Colonic mucosa (tissue), 4 donors: ENCODE measurements at regions of chr22 and their contacts with region 1.

Region 1: GRCh38 chr22:41403532-41404318 is 22.0 kb downstream of the TEF start:
- DNase-seq: peak; percentile 87
- H3K4me3 ChIP-seq: no peak overlapping the region
- H3K27ac ChIP-seq: no peak overlapping the region
- H3K4me1 ChIP-seq: peaks cover 4% of the 10 kb centered on the region
- H3K27me3 ChIP-seq: no peaks in the 10 kb centered on the region
- CTCF ChIP-seq: peak; percentile 92

Region 2: GRCh38 chr22:41517172-41518047 is 113.7 kb after region 1 on chr22:
- intact Hi-C with region 1: loop called (anchors 2 kb)
- DNase-seq: peak; percentile 84
- H3K4me3 ChIP-seq: no peak overlapping the region
- H3K27ac ChIP-seq: no peak overlapping the region
- H3K4me1 ChIP-seq: no peaks in the 10 kb centered on the region
- H3K27me3 ChIP-seq: no peaks in the 10 kb centered on the region
- CTCF ChIP-seq: peak; percentile 72

Region 3: GRCh38 chr22:41532908-41533825 is 129.4 kb after region 1 on chr22:
- intact Hi-C with region 1: loop called (anchors 5 kb)
- DNase-seq: peak; percentile 78
- H3K4me3 ChIP-seq: no peak overlapping the region
- H3K27ac ChIP-seq: no peak overlapping the region
- H3K4me1 ChIP-seq: no peaks in the 10 kb centered on the region
- H3K27me3 ChIP-seq: no peaks in the 10 kb centered on the region
- CTCF ChIP-seq: peak; percentile 85